ENCODE measurements at regions of chr17 and their contacts with region 1.

Region 1: DNA sequence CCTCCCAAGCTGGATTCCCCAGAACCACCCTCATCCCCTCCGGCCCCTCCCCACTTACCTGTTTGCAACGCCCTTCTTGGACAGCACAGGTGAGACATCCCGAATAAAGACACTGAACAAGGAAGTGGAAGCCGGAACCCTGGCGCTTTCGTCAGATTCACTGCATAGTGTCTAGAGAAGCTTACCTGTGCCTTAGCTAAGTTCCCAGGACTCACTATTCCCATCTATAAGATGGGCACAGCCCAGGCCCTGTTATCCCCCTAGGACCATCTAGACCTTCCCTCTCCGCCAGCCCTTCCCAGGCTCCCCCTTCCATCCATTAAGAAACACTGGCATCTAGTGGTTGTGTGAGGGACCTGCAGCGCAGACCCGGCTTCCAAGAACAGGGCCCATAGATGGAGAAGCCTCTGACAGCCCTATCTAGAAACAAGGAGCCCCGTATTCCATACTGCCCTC is 26.9 kb upstream of the RPL38 start:
- DNase-seq: peak; percentile 58 to 81
- ATAC-seq: peak; percentile 66
- H3K4me3 ChIP-seq: no peak overlapping the region
- H3K27ac ChIP-seq: no peak overlapping the region
- H3K4me1 ChIP-seq: no peaks in the 10 kb centered on the region
- H3K27me3 ChIP-seq: no peaks in the 10 kb centered on the region

Region 2: DNA sequence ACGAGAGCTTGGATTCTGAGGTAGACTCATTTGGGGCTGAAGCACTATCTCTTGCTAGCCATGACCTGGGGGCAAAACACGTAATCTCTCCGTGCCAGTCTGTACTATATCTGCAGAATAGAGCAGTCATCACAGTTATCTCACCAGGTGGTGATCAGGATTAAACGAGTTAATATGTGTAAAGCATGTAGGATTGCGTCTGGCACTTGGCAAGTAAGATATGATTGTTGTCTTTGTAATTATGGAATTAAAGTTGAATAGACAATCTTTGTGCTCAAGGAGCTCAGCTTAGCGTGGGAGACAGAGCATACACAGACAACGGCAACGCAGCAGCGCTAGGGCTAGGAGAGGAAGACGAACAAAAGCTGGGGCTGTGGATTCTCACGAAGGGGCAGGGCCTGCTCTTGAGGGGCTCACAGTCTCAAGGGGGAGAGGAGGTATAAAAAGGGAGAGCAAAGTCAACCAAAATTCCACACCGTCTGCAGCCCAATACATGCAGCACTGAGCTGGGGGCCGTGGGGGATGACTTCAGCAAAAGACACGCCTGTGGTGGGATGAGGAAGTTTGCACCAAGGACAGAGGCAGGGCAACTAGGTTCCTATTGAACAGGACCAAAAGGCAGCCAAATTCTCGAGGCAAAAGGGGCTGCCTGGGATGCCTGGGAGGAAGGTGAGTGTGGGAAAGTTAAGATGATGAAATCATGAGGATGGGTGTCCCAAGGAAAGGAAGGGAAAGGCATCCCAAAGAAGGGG is 600.9 kb before region 1 on chr17:
- intact Hi-C with region 1: loop called in 1 of 2 experiments (anchors 10 kb)
- DNase-seq: no peak
- ATAC-seq: no peak
- H3K4me3 ChIP-seq: no peak overlapping the region
- H3K27ac ChIP-seq: no peak overlapping the region
- H3K4me1 ChIP-seq: no peaks in the 10 kb centered on the region
- H3K27me3 ChIP-seq: no peaks in the 10 kb centered on the region

Region 3: DNA sequence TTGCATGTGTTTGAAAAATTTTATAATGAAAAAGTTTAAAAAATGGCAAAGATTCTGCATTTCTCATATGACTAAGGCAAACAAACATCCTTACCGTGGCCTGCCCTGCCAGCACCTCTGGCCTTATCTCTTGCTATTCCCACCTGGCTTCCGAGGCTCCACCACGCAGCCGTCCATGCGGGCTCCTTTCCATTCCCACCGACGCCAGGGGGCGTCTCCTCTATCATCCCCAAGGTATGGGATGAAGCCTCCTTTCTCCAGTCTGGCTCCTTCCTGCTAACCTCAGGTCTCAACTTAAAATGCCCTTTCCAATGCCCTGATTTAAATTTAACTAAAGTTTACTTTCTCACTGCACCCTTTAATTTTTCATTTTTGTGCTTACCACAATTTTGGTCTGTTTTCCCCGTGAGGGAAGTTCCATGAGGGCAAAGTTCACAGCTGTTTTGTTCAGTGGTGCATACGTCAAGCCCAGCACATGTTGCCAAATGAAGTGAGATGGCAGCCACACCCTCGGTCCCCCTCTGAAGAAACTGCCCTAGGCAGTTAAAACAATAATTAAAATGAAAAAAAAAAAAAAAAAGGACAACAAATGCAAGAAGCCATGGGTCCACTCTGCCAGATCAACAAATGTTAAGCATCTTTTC is 519.0 kb before region 1 on chr17:
- intact Hi-C with region 1: loop called (anchors 5 to 10 kb)
- DNase-seq: peak; percentile 60 to 83
- ATAC-seq: no peak
- H3K4me3 ChIP-seq: no peak overlapping the region
- H3K27ac ChIP-seq: no peak overlapping the region
- H3K4me1 ChIP-seq: no peaks in the 10 kb centered on the region
- H3K27me3 ChIP-seq: peaks cover 0 to 2% of the 10 kb centered on the region in 2 donors

Region 4: DNA sequence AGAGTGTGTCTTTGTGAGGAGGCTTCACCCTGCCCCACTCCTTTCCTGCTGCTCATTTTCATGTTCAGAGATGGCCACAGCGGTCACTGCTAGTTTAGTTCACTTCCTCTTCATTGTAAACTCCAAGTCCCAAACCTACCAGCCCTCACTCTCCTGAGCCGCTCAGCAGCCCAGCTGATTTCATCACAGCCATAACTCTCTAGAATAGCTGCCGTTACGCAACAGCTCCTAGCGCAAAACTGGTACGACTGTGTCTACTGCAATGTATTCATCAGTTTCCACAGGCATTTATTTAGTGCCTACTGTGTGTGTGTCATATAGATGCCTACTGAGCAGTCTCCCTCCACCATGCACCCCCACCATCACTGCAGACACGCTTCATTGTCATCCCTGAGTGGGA is 206.6 kb before region 1 on chr17:
- intact Hi-C with region 1: no loop called
- DNase-seq: peak; percentile 55 to 75
- ATAC-seq: peak; percentile 33
- H3K4me3 ChIP-seq: no peak overlapping the region
- H3K27ac ChIP-seq: no peak overlapping the region
- H3K4me1 ChIP-seq: no peaks in the 10 kb centered on the region
- H3K27me3 ChIP-seq: peaks cover 0 to 1% of the 10 kb centered on the region in 2 donors